Breast epithelium (tissue), 4 donors: ENCODE measurements at regions of chr16 and their contacts with region 1.

Region 1: DNA sequence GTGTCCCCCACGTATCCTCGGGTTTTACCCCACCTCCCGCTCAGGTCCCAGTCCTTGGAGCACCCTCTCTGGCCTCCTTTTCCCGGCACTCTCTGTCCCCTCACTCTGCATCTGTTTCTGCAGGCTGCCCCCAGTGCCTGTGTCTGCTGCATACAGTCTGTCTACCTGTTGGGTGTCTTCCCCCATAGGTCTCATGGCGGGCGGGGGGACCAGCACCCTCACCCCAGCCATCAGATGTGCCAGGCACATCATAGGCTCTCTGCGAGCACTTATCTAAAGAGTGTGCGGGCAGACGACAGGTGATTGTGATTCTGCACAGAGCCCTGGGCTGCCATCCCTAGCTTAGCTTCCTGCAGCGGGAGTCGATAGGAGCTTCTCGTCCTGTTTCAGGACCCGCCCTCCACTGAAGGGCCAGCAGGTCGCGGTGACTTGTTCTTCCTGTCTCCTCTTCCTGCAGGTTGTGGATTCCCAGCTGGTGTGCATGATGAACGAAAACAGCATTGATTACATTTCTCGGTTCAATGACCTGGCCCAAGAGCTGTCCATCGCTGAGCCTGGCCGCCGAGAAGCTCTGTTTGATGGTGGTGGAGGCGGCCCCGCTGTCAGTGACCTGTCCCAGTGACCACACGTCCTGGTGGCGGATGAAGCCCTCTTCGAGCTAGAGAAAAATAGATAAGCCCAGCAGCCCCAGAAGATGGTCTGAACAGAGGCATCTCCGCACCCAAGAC is 4.5 kb upstream of the JPT2 start:
- DNase-seq: no peak
- H3K4me3 ChIP-seq: no peak overlapping the region
- H3K27ac ChIP-seq: no peak overlapping the region
- H3K4me1 ChIP-seq: no peaks in the 10 kb centered on the region
- H3K27me3 ChIP-seq: no peaks in the 10 kb centered on the region
- CTCF ChIP-seq: no peak
- POLR2A ChIP-seq: no peak

Region 2: DNA sequence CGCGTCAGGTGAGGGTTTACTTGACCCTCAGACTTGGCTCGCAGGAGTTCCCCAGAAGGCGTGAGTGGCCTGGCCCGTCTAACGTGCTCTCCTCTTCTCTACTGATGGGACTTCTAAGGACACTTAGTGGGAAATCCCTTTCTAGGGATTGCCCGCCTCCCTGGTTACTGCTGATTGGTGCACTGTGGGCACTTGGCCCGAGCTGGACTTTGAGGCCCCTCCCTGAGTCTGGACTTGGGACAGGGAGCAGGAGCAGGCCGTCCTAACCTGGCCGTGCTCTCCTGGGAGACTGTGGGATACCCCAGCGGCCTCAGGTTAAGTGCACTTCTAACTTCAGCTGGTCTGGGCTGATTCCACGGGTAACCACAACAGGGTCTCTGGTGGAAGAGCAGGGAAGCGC is 76.4 kb before region 1 on chr16:
- intact Hi-C with region 1: loop called (anchors 2 kb)
- DNase-seq: no peak
- H3K4me3 ChIP-seq: no peak overlapping the region
- H3K27ac ChIP-seq: no peak overlapping the region
- H3K4me1 ChIP-seq: no peaks in the 10 kb centered on the region
- H3K27me3 ChIP-seq: no peaks in the 10 kb centered on the region
- CTCF ChIP-seq: no peak
- POLR2A ChIP-seq: no peak

Region 3: DNA sequence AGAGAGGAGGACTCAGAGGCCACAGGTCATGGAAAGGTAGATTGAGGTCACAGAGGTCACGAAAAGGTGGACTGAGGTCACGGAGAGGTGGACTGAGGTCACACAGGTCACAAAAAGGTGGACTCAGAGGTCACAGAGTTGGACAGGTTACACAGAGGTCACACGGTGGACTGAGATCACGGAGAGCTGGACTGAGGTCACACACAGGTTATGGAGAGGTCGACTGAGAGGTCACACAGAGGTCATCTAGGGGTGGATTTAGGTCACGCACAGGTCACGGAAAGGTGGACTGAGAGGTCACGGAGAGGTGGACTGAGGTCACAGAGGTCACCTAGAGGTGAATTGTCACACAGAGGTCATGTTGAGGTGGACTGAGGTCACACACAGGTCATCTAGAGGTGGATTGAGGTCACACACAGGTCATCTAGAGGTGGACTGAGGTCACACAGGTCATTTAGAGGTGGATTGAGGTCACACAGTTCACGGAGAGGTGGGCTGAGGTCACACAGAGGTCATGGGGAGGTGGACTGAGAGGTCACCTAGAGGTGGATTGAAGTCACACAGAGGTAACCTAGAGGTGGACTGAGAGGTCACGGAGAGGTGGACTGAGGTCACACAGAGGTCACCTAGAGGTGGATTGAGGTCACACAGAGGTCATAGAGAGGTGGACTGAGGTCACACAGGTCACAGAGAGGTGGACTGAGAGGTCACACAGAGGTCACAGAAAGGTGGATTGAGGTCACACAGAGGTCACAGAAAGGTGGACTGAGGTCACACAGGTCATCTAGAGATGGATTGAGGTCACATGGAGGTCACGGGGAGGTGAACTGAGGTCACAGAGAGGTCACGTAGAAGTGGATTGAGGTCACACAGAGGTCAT is 22.3 kb before region 1 on chr16:
- intact Hi-C with region 1: no loop called
- DNase-seq: no peak
- H3K4me3 ChIP-seq: no peak overlapping the region
- H3K27ac ChIP-seq: peak overlapping the region in 1 of 2 donors; percentile 33
- H3K4me1 ChIP-seq: peaks cover 0 to 8% of the 10 kb centered on the region in 2 donors
- H3K27me3 ChIP-seq: no peaks in the 10 kb centered on the region
- CTCF ChIP-seq: no peak
- POLR2A ChIP-seq: no peak